A673 (cell line): ENCODE measurements at regions of chr4 and their contacts with region 1.

Region 1: DNA sequence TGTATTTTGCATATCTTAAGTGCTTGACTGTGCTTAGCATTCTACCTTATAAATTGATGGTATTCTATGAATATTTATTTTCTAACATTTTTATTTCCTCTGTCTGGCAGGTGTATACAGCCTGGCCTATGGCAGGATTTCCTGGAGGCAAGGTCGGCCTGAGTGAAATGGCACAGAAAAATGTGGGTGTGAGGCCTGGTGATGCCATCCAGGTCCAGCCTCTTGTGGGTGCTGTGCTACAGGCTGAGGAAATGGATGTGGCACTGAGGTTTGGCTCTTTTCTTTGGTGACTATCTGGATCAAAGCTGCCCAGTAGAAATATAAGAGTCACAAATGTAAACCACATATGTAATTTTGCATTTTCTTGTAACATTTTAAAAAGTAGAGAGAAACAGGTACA is 6.5 kb upstream of the NUDT6 start:
- DNase-seq: no peak
- H3K4me3 ChIP-seq: no peak overlapping the region
- H3K27ac ChIP-seq: no peak overlapping the region
- H3K4me1 ChIP-seq: peaks cover 9% of the 10 kb centered on the region
- H3K27me3 ChIP-seq: no peaks in the 10 kb centered on the region
- CTCF ChIP-seq: no peak

Region 2: GRCh38 chr4:122450847-122451246 is 478.1 kb before region 1 on chr4:
- CTCF ChIA-PET with region 1: no interaction called
- POLR2A ChIA-PET with region 1: no interaction called
- intact Hi-C with region 1: loop called (anchors 5 kb)
- DNase-seq: peak; percentile 64
- H3K4me3 ChIP-seq: no peak overlapping the region
- H3K27ac ChIP-seq: no peak overlapping the region
- H3K4me1 ChIP-seq: no peaks in the 10 kb centered on the region
- H3K27me3 ChIP-seq: no peaks in the 10 kb centered on the region
- CTCF ChIP-seq: peak; percentile 57

Region 3: GRCh38 chr4:123034023-123034422 is 105.1 kb after region 1 on chr4:
- CTCF ChIA-PET with region 1: no interaction called
- POLR2A ChIA-PET with region 1: no interaction called
- intact Hi-C with region 1: no loop called
- DNase-seq: no peak
- H3K4me3 ChIP-seq: no peak overlapping the region
- H3K27ac ChIP-seq: no peak overlapping the region
- H3K4me1 ChIP-seq: peaks cover 5% of the 10 kb centered on the region
- H3K27me3 ChIP-seq: no peaks in the 10 kb centered on the region
- CTCF ChIP-seq: no peak